IMR-90 (cell line): ENCODE measurements at regions of chr1 and their contacts with region 1.

Region 1: GRCh38 chr1:222814536-222815439 is at the start of gene DISP1:
- DNase-seq: peak; percentile 74
- ATAC-seq: peak; percentile 83
- H3K4me3 ChIP-seq: peak within 1 kb of the TSS; percentile 94
- H3K27ac ChIP-seq: peak within 1 kb of the TSS; percentile 85
- H3K4me1 ChIP-seq: peaks cover 6% of the 10 kb centered on the region; the same call in 1 of the 2 replicates
- H3K27me3 ChIP-seq: no peaks in the 10 kb centered on the region
- CTCF ChIP-seq: no peak
- POLR2A ChIP-seq: peak; percentile 82
- RAD21 ChIP-seq: no peak
- total RNA-seq, gene DISP1: 4.7 and 5.2 TPM in 2 replicates

Region 2: DNA sequence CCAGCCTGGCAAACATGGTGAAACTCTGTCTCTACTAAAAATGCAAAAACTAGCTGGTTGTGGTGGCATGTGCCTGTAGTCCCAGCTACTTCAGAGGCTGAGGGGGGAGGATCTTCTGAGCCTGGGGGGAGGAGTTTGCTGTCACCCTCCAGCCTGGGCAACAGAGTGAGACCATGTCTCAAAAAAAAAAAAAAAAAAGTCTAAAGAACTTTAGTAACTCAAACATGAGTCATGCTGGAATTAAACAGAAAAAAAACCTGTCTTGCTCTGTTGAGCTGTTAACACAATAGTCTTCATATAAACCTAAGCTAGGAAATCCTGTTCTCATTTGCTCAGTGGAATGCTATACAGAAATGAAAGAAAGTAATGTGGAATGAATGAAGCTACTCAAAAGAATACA is 16.7 kb before region 1 on chr1:
- CTCF ChIA-PET with region 1: interaction called, 4 read pairs
- POLR2A ChIA-PET with region 1: no interaction called
- dilution Hi-C with region 1: no loop called
- in situ Hi-C with region 1: no loop called
- intact Hi-C with region 1: loop called (anchors 2 kb)
- DNase-seq: peak; percentile 79
- ATAC-seq: peak; percentile 89
- H3K4me3 ChIP-seq: no peak overlapping the region
- H3K27ac ChIP-seq: no peak overlapping the region
- H3K4me1 ChIP-seq: peaks cover 2% of the 10 kb centered on the region; the same call in 1 of the 2 replicates
- H3K27me3 ChIP-seq: peaks cover 4% of the 10 kb centered on the region
- CTCF ChIP-seq: no peak
- POLR2A ChIP-seq: no peak
- RAD21 ChIP-seq: no peak

Region 3: DNA sequence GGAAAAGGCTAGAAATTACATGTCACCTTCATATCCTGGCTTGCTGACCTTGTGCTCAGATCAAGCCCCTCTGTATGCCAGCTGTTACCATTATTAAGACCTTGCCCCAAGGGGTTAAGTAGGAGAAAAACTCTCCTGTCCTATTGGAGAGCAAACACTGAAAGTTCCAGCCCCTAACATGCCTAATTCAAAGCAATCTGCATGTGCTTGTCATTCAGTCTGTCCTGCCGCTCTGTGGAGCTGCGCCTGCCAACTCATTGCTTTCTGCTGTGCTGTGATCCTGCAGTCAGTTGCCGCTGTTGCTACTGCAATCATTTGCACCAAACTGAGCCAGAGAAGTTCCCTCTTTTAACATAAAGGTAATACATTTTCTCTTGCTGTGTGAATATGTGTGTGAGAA is 113.4 kb after region 1 on chr1:
- CTCF ChIA-PET with region 1: no interaction called
- POLR2A ChIA-PET with region 1: no interaction called
- dilution Hi-C with region 1: no loop called
- in situ Hi-C with region 1: no loop called
- intact Hi-C with region 1: loop called (anchors 5 kb)
- DNase-seq: peak; percentile 21
- ATAC-seq: peak; percentile 40; the same call in 1 of the 2 replicates
- H3K4me3 ChIP-seq: no peak overlapping the region
- H3K27ac ChIP-seq: no peak overlapping the region
- H3K4me1 ChIP-seq: peaks cover 6% of the 10 kb centered on the region
- H3K27me3 ChIP-seq: no peaks in the 10 kb centered on the region
- CTCF ChIP-seq: no peak
- POLR2A ChIP-seq: no peak
- RAD21 ChIP-seq: no peak

Region 4: GRCh38 chr1:223010582-223011504 is 196.1 kb after region 1 on chr1:
- CTCF ChIA-PET with region 1: no interaction called
- POLR2A ChIA-PET with region 1: no interaction called
- dilution Hi-C with region 1: no loop called
- in situ Hi-C with region 1: no loop called
- intact Hi-C with region 1: loop called (anchors 5 kb)
- DNase-seq: peak; percentile 19
- ATAC-seq: peak; percentile 73
- H3K4me3 ChIP-seq: no peak overlapping the region
- H3K27ac ChIP-seq: no peak overlapping the region
- H3K4me1 ChIP-seq: 0 out of 2 replicates have a peak, but pooled peaks cover 4% of the 10 kb centered on the region
- H3K27me3 ChIP-seq: no peaks in the 10 kb centered on the region; the same call in 1 of the 2 replicates
- CTCF ChIP-seq: no peak
- POLR2A ChIP-seq: no peak
- RAD21 ChIP-seq: no peak

Region 5: DNA sequence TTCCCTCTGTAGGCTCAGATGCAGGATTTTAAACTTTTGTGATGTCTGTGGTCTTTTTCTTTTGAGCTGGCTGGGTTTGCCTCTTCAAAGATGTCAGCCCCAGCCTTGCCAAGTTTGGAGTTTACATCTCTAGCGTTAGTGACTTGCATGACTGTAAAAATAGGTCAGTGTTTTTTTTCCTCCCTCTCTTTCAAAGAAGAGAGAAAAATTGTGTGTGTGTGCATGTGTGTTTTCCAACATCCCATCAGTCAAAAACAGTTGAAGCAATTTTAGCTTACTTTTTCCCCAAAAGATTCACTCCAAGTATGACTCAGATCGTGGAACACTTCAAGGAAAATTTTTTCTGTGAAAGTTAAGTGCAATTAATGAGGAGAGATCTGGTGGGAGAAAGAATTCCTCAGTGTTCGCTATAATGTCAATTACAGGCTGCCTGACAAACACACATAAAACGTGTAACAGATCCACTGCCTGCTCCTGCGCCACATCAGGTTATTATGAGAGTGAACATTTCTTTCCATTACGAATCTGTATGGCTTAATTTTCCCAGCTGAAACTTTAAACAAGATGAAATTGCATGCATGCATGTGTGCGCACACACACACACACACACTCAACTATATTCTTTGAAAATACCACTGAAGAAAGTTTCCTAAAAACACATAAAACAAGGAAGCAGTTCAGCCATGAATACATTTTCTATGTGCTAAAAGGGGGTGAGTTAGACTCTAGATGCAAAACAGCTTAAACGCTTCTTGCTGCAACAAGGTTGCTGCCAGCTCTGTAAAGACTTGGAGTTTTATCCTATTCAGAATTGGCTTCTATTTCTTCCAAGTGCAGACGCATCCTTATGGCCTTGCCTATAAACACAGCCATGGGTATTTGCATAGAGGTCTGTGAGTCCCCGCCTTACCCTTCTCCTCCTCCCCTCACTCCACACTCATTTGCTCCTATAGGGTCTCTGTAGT is 272.8 kb after region 1 on chr1:
- CTCF ChIA-PET with region 1: interaction called, 10 read pairs
- POLR2A ChIA-PET with region 1: no interaction called
- dilution Hi-C with region 1: no loop called
- in situ Hi-C with region 1: no loop called
- intact Hi-C with region 1: no loop called
- DNase-seq: peak; percentile 20
- ATAC-seq: no peak
- H3K4me3 ChIP-seq: no peak overlapping the region
- H3K27ac ChIP-seq: no peak overlapping the region
- H3K4me1 ChIP-seq: no peaks in the 10 kb centered on the region
- H3K27me3 ChIP-seq: peaks cover 52% of the 10 kb centered on the region
- CTCF ChIP-seq: no peak
- POLR2A ChIP-seq: no peak
- RAD21 ChIP-seq: no peak